ENCODE measurements at regions of chr3 and their contacts with region 1.

Region 1: DNA sequence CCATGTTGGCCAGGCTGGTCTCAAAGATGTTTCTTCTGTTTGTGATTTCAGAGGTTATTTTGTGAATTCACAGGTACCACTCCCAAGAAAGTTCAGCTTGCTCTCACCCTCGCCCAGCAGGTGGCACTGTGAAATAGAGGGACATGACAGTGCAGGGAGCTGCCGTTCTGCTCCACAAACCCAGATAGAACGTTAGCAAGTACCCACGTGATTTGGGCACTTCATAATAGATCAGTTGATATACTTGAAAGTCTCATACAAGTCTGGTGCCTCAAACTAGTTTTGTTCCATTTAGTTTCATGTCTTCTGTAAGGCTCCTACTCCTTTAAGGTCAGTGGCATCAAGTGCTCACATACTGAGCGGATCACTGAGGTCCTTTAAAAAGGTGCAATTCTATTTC is 45.5 kb downstream of the FILIP1L start:
- DNase-seq: peak; percentile 90
- ATAC-seq: peak; percentile 73
- H3K4me3 Mint-ChIP-seq: peak overlapping the region; percentile 2
- H3K27ac Mint-ChIP-seq: peak overlapping the region; percentile 56
- H3K4me1 Mint-ChIP-seq: peaks cover 55% of the 10 kb centered on the region
- H3K27me3 Mint-ChIP-seq: no peaks in the 10 kb centered on the region

Region 2: GRCh38 chr3:99842826-99843589 is 225.8 kb before region 1 on chr3:
- CTCF ChIA-PET with region 1: interaction called, 24 read pairs
- POLR2A ChIA-PET with region 1: no interaction called
- DNase-seq: no peak
- ATAC-seq: peak; percentile 63
- H3K4me3 Mint-ChIP-seq: no peak overlapping the region
- H3K27ac Mint-ChIP-seq: no peak overlapping the region
- H3K4me1 Mint-ChIP-seq: peaks cover 18% of the 10 kb centered on the region
- H3K27me3 Mint-ChIP-seq: no peaks in the 10 kb centered on the region

Region 3: GRCh38 chr3:99997293-99997692 is 71.5 kb before region 1 on chr3:
- CTCF ChIA-PET with region 1: no interaction called
- POLR2A ChIA-PET with region 1: no interaction called
- DNase-seq: no peak
- ATAC-seq: no peak
- H3K4me3 Mint-ChIP-seq: no peak overlapping the region
- H3K27ac Mint-ChIP-seq: no peak overlapping the region
- H3K4me1 Mint-ChIP-seq: no peaks in the 10 kb centered on the region
- H3K27me3 Mint-ChIP-seq: no peaks in the 10 kb centered on the region

Region 4: GRCh38 chr3:100009276-100010086 is 59.3 kb before region 1 on chr3:
- CTCF ChIA-PET with region 1: no interaction called
- POLR2A ChIA-PET with region 1: no interaction called
- DNase-seq: no peak
- ATAC-seq: no peak
- H3K4me3 Mint-ChIP-seq: no peak overlapping the region
- H3K27ac Mint-ChIP-seq: no peak overlapping the region
- H3K4me1 Mint-ChIP-seq: peaks cover 7% of the 10 kb centered on the region
- H3K27me3 Mint-ChIP-seq: no peaks in the 10 kb centered on the region

Region 5: DNA sequence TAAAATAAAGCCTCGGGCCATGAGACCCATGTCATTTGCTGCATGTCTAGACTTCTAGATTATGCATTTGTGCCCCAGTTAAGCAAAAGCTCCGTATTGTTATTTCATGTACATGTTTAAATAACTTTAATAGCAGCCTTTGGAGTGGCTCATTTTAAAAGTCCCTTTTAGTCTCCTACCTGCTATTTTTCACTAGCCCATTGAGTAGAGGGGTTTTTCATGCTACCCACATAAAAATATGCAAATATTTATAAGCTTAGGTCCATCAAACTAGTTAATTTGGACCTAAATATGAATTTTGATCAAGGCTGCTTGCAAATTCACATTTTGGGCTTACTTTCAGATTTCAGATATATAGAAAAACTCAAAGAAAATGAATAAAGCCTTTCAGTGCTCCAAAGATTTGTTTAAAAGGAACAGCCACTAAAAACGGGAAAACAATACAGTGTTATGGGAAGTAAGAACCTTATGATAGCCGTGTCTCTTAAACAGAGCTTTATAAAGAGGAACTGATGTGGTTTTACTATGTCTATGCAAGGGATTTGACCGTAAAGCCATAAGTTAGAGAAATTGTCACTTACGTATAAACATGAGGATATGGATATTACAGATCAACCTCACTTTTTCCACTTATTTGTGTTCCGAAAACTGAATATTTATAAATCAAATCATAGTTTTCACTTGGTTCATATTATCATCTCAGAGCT is 15.4 kb after region 1 on chr3:
- CTCF ChIA-PET with region 1: interaction called, 84 read pairs
- POLR2A ChIA-PET with region 1: interaction called, 10 read pairs
- DNase-seq: no peak
- ATAC-seq: no peak
- H3K4me3 Mint-ChIP-seq: no peak overlapping the region
- H3K27ac Mint-ChIP-seq: no peak overlapping the region
- H3K4me1 Mint-ChIP-seq: peaks cover 56% of the 10 kb centered on the region
- H3K27me3 Mint-ChIP-seq: peaks cover 3% of the 10 kb centered on the region

Region 6: GRCh38 chr3:100103558-100104441 is 35.0 kb after region 1 on chr3:
- CTCF ChIA-PET with region 1: interaction called, 11 read pairs
- POLR2A ChIA-PET with region 1: no interaction called
- DNase-seq: no peak
- ATAC-seq: no peak
- H3K4me3 Mint-ChIP-seq: no peak overlapping the region
- H3K27ac Mint-ChIP-seq: peak overlapping the region; percentile 31
- H3K4me1 Mint-ChIP-seq: peaks cover 59% of the 10 kb centered on the region
- H3K27me3 Mint-ChIP-seq: no peaks in the 10 kb centered on the region

Region 7: DNA sequence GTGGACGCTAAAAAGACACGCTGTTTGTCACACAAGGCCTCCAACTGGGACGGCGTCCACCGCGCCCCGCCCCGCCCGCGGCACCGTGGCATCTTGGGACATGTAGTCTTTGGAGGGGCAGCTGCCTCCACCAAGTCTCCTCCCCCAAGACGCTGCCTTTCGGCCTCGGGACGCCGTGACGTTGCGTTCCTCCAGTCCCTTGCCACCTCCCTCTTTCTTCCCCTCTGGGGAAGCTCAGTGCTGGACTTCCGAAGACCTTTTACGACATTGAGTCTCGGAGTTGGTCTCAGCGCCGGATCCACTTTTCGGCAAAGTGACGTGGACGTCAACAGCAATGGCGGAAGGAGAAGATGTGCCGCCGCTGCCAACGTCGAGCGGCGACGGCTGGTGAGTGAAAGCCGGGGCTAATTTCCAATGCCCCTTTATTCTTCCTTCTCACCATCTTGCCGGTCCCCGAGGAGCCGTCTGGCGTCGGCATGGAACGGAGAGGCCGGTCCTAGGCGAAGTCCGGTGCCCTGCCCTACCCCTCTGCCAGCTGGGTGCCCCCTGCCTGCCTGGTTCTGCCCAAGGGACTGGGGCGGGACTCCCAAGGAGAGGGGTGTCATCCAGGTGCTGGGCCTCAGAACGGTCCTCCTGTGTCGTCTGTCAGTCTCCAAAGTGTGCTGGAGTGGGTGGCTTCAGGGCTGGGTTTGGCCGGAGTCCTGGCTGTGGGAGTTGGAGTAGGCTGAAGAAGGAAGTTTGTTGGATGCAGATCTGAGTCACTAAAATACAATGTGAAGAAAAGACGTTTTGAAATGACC is 192.1 kb after region 1 on chr3 and contains the start of gene TBC1D23:
- CTCF ChIA-PET with region 1: interaction called, 181 read pairs
- POLR2A ChIA-PET with region 1: interaction called, 4 read pairs
- DNase-seq: peak; percentile 99
- ATAC-seq: peak; percentile 100
- H3K4me3 Mint-ChIP-seq: peak within 1 kb of the TSS; percentile 88
- H3K27ac Mint-ChIP-seq: peak within 1 kb of the TSS; percentile 94
- H3K4me1 Mint-ChIP-seq: peaks cover 51% of the 10 kb centered on the region
- H3K27me3 Mint-ChIP-seq: no peaks in the 10 kb centered on the region
- total RNA-seq, gene TBC1D23: 28.6 to 29.3 TPM

Measured in activated CD8-positive, alpha-beta T cell treated with anti-CD3 and anti-CD28 coated beads, Interleukin-2, amount 10 ng/mL, durations not matched to agents 7 days and 5 days (primary cell).